Posterior vena cava (tissue), 2 donors: ENCODE measurements at regions of chr2 and their contacts with region 1.

Region 1: DNA sequence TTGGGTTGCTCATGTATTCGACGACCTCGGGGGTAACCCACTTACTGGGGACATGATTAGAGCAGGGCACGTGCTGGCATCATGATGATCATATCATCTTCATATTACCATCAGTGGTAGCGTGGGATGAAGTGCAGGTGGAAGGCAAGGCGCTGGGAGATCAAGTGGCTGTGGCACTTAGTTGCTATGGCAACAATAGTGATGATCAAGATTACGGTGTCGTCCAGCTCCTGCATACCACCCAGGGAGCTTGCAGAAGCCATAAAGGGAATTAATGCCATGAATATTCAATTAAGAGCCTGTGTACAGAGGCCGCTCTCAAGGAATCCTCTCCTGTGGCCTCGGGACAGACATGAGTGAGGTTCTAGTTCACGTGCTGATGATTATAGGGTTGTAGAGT is 237.2 kb upstream of the COPS8 start:
- DNase-seq: no peak

Region 2: DNA sequence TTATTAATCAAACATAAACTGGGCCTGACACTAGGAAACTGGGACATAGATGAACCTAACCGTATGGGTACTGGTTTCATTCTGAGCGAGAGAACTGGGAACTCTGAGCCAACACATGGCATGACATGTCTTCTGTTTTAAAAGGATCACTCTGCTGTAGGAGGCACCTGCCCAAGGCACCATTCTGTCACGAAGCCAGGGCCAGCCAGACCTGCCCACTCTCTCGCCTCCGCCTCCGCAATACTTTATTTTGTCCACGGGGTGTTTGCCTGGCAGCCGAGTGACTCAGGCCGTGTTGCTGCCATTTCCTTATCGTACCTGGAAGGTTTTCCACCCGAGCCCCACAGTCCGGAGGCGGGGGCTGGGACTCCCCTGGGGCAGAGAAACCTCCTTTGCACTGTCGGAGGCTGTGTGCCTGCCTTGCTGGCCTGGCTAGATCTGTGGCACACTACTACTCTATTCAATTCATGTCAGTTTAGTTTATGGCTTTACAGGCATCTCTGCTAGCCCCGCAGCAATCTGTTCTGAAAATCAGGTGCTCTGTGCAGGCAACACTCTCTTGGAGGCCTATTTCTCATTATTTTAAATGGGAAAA is 399.2 kb before region 1 on chr2:
- intact Hi-C with region 1: no loop called
- DNase-seq: no peak

Region 3: GRCh38 chr2:236816197-236817170 is 32.0 kb before region 1 on chr2:
- intact Hi-C with region 1: loop called in 1 of 2 experiments (anchors 2 kb)
- DNase-seq: no peak